ENCODE measurements at regions of chr10 and their contacts with region 1.

Region 1: DNA sequence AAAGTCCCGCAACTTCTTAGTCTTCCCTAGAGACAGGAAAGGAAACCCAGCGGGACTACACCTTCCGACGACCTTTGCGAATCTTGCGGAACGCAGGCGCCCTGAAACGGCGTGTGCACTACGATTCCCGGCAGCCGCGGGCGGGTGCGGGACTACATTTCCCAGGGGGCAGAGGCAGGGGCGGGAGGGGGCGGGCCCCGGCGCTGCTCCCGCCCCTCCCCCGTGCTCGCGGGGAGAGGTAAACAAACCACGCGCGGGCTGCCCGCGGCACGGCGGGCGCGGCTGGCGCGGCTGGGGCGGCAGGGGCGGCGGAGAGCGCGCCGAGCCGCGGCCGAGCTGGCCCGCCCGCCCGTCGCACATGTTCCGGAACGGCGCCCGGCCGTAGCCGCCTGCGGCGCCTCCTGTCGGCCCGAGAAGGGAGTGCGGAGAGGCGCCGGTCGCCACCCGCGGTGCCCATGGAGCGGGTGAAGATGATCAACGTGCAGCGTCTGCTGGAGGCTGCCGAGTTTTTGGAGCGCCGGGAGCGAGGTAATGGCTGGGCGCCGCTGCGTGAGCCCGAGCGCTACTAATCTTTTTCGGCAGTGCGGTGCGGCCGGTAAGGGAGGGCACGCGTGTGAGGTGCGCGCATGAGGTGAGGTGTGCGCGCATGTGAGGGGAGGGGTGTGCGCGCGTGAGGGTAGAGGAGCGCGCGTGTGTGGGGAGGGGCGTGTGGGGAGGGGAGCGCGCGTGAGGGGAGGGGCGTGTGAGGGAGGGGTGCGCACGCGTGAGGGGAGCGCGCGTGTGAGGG is 18.5 kb downstream of the MXI1 start:
- DNase-seq: peak; percentile 87 to 90
- ATAC-seq: peak; percentile 73 to 77
- H3K4me3 ChIP-seq: peak overlapping the region; percentile 89 to 95 (median 93)
- H3K27ac ChIP-seq: peak overlapping the region; percentile 99 to 100 (median 99)
- H3K4me1 ChIP-seq: peaks cover 20 to 30% of the 10 kb centered on the region in 2 donors
- H3K27me3 ChIP-seq: no peaks in the 10 kb centered on the region
- CTCF ChIP-seq: peak; percentile 62 to 93 (median 87)
- POLR2A ChIP-seq: peak; percentile 72 to 86

Region 2: DNA sequence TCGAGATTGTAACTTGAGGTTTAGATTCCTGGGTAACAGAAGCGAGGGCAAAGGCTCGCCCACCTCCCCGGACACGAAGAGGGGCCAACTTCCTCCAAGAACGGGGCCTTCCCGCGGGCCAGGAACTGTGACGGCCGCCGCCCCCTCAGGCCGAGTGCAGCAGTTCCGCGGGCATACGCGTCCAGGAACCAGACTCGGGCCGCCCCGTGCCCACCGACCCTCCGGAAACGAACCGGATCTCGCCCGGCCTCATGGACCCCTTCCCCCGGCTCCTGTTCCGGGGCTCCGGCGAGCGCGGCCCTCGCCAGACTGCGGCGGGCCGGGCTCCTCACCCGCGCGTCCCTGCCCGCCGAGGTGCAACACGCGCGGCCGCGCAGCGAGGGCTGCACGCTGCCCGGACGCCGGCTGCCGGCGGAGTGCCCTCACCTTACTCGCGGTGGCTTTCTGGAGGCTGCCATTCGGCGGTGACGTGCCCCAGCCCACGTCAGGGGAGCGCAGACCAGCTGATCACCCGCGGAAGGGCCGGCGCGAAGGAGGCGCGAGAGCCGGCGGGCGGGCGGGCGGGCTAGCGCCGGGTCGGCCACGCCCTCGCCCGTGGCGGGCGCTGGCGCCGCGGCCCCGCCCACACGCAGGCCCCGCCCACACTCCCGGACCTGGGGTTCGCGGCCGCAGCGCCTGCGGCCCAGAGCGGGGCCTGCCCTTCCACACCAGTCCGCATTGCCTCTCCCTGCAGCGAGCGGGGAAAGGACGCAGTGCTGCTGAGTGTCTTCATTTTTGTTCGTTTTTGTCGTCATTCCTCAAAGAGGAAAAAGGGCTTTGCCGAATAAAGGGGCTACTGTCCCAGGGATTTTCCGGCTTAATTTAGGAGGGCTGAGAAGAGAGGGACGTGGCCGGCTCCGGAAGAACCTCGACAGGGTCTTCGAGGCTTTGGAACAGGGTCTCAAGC is 302.7 kb before region 1 on chr10 and contains the start of gene XPNPEP1:
- in situ Hi-C with region 1: no loop called
- intact Hi-C with region 1: loop called (anchors 10 kb)
- DNase-seq: peak; percentile 81 to 84
- ATAC-seq: peak; percentile 95 to 96
- H3K4me3 ChIP-seq: peak within 1 kb of the TSS; percentile 75 to 92 (median 87)
- H3K27ac ChIP-seq: peak within 1 kb of the TSS; percentile 88 to 94 (median 93)
- H3K4me1 ChIP-seq: peaks cover 11 to 14% of the 10 kb centered on the region in 2 donors
- H3K27me3 ChIP-seq: no peaks in the 10 kb centered on the region
- CTCF ChIP-seq: no peak
- POLR2A ChIP-seq: peak; percentile 92 to 95
- total RNA-seq, gene XPNPEP1: 39.9 to 72.3 (median 64.0) TPM

Region 3: DNA sequence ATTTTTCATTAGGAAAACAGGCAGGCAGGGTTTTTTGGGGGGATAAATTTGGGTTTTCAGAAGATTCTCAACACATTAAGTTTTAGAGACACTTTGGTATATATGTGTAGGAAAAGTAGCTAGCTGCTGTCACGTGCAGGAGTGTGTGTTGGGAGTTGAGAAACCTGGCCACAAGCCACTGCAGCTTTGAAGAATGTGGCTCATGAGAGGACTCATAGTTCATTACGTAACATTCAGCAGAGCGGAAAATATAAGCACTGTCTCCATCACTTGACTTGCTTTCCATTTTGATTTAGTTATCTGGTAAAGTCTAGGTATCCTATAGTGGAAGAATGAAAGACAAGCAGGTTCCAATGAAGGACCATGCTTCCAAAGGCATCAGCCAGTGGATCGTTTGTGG is 47.5 kb after region 1 on chr10:
- in situ Hi-C with region 1: loop called in 1 of 4 experiments (anchors 5 kb)
- intact Hi-C with region 1: loop called (anchors 2 kb)
- DNase-seq: peak; percentile 38 to 63
- ATAC-seq: no peak
- H3K4me3 ChIP-seq: no peak overlapping the region
- H3K27ac ChIP-seq: peak overlapping the region; percentile 11 to 89 (median 41)
- H3K4me1 ChIP-seq: peaks cover 62 to 67% of the 10 kb centered on the region in 2 donors
- H3K27me3 ChIP-seq: no peaks in the 10 kb centered on the region
- CTCF ChIP-seq: no peak
- POLR2A ChIP-seq: no peak

Region 4: GRCh38 chr10:110567201-110568054 is 341.5 kb after region 1 on chr10 and contains the start of gene SMC3:
- in situ Hi-C with region 1: no loop called
- intact Hi-C with region 1: loop called (anchors 1 kb)
- DNase-seq: peak; percentile 82 to 87
- ATAC-seq: peak; percentile 95 to 96
- H3K4me3 ChIP-seq: peak within 1 kb of the TSS; percentile 86 to 100 (median 93)
- H3K27ac ChIP-seq: peak within 1 kb of the TSS; percentile 93 to 99 (median 96)
- H3K4me1 ChIP-seq: peaks cover 36% of the 10 kb centered on the region in 2 donors
- H3K27me3 ChIP-seq: peaks cover 0 to 5% (median 2%) of the 10 kb centered on the region in 3 donors
- CTCF ChIP-seq: no peak
- POLR2A ChIP-seq: peak; percentile 63 to 65
- total RNA-seq, gene SMC3: 19.5 to 25.9 (median 21.9) TPM